HCT116 (cell line): ENCODE measurements at regions of chr1 and their contacts with region 1.

Region 1: GRCh38 chr1:28602536-28603439 is 10.7 kb downstream of the RAB42 start:
- DNase-seq: no peak
- ATAC-seq: peak; percentile 60
- H3K4me3 ChIP-seq: no peak overlapping the region
- H3K27ac ChIP-seq: peak overlapping the region; percentile 57
- H3K4me1 ChIP-seq: peaks cover 17 to 33% of the 10 kb centered on the region in 2 experiments
- H3K27me3 ChIP-seq: no peaks in the 10 kb centered on the region
- CTCF ChIP-seq: peak; percentile 73 to 87 (median 84)
- POLR2A ChIP-seq: no peak
- RAD21 ChIP-seq: peak; percentile 96

Region 2: DNA sequence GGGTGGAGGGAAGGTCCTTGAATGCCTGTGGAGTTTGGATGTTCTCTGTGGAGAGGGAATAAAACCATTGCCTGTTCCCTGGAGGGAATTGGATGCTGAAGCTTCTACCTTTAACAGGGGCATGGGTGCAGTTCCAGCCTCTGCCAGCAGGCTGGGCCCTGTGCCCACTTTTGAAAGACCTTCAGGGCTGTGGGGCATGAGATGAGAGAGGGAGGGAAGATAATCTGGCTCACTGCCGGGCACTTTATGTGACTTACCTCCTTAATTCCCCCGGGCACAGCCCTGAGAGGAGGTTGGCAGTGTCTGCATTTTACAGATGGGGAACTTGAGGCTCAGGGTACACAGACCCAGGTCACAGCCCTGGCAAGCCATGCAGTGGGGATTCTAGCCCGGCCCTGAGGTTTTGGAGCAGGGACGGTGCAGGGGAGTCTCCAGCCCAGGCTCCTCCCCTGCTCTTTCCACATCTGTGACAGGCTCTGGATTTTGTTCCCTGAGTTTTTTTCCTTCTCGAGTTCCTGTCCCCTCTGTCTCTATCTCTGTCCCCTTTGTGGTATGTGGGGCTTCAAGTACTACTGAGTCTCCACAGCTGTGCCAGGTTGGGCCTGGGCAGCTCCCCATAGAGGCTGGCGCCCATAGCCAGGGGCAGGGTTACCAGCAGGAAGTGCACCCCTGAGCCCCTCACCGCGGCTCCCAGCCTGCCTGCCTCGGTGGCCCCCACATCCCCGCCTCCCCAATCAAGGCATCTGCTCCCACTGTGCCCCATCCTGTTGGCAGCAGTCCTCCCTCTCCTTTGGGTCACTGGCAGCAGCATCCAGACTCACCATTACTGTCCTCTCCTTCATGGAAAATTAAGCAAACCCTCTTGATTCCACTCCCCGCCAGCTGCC is 744.5 kb before region 1 on chr1:
- CTCF ChIA-PET with region 1: no interaction called
- POLR2A ChIA-PET with region 1: no interaction called
- RAD21 ChIA-PET with region 1: no interaction called
- intact Hi-C with region 1: loop called (anchors 5 kb)
- DNase-seq: peak; percentile 56
- ATAC-seq: peak; percentile 95
- H3K4me3 ChIP-seq: no peak overlapping the region
- H3K27ac ChIP-seq: no peak overlapping the region
- H3K4me1 ChIP-seq: peaks cover 0 to 9% of the 10 kb centered on the region in 2 experiments; a peak in 2 of 4 replicates
- H3K27me3 ChIP-seq: no peaks in the 10 kb centered on the region
- CTCF ChIP-seq: peak; percentile 88 to 99 (median 98)
- POLR2A ChIP-seq: no peak
- RAD21 ChIP-seq: peak; percentile 98

Region 3: GRCh38 chr1:28359592-28360239 is 243.1 kb before region 1 on chr1:
- CTCF ChIA-PET with region 1: interaction called, 13 read pairs
- POLR2A ChIA-PET with region 1: no interaction called
- RAD21 ChIA-PET with region 1: no interaction called
- intact Hi-C with region 1: loop called (anchors 5 kb)
- DNase-seq: no peak
- ATAC-seq: peak; percentile 91
- H3K4me3 ChIP-seq: no peak overlapping the region
- H3K27ac ChIP-seq: no peak overlapping the region
- H3K4me1 ChIP-seq: peaks cover 0 to 3% of the 10 kb centered on the region in 2 experiments; a peak in 1 of 4 replicates
- H3K27me3 ChIP-seq: no peaks in the 10 kb centered on the region
- CTCF ChIP-seq: peak; percentile 63 to 77 (median 66); a peak in 5 of 6 replicates
- POLR2A ChIP-seq: no peak
- RAD21 ChIP-seq: peak; percentile 73

Region 4: GRCh38 chr1:28409090-28409489 is 193.7 kb before region 1 on chr1:
- CTCF ChIA-PET with region 1: interaction called, 13 read pairs
- POLR2A ChIA-PET with region 1: no interaction called
- RAD21 ChIA-PET with region 1: no interaction called
- intact Hi-C with region 1: loop called (anchors 2 kb)
- DNase-seq: no peak
- ATAC-seq: no peak
- H3K4me3 ChIP-seq: no peak overlapping the region
- H3K27ac ChIP-seq: no peak overlapping the region
- H3K4me1 ChIP-seq: peaks cover 0 to 5% of the 10 kb centered on the region in 2 experiments; a peak in 2 of 4 replicates
- H3K27me3 ChIP-seq: no peaks in the 10 kb centered on the region
- CTCF ChIP-seq: no peak
- POLR2A ChIP-seq: no peak
- RAD21 ChIP-seq: no peak

Region 5: DNA sequence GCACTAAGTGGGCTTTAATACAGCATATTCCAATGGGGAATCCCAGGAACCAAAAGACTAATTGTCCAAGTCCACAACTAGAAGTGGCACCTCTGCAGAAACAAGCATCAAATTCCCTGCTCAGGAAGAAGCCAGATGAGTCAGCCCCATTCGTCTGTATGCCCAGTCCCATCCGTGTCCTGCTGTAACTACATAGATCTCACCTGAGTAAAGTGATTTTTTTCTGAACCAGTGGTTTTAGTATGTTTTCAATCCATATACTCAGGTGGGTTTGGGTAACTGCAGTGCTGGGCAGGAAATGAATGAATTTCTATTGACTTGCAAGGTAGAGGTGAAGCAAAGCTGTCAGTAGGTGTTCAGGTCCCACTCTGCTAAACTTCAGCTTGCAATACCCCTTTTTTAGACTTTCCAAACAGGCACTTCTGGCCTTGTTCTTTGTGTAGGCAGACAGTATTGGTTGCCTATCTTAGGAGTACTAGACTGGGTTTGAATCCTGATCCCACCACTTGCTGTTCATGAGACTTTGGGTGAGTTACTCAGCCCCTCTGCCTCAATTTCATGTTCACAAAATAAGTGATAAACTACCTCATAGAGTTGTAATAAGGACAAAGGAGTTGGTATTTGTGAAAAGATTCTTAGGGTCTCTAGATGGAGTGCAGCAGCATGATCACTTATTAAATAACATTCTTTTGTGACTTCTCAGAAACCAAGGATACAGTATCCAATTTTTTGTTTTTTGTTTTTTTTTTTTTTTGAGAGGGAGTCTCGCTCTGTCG is 91.9 kb before region 1 on chr1:
- CTCF ChIA-PET with region 1: interaction called, 28 read pairs
- POLR2A ChIA-PET with region 1: interaction called, 22 read pairs
- RAD21 ChIA-PET with region 1: no interaction called
- intact Hi-C with region 1: no loop called
- DNase-seq: no peak
- ATAC-seq: peak; percentile 24
- H3K4me3 ChIP-seq: no peak overlapping the region
- H3K27ac ChIP-seq: peak overlapping the region; percentile 97
- H3K4me1 ChIP-seq: peaks cover 19 to 65% of the 10 kb centered on the region in 2 experiments
- H3K27me3 ChIP-seq: no peaks in the 10 kb centered on the region
- CTCF ChIP-seq: no peak
- POLR2A ChIP-seq: peak; percentile 69
- RAD21 ChIP-seq: no peak

Region 6: DNA sequence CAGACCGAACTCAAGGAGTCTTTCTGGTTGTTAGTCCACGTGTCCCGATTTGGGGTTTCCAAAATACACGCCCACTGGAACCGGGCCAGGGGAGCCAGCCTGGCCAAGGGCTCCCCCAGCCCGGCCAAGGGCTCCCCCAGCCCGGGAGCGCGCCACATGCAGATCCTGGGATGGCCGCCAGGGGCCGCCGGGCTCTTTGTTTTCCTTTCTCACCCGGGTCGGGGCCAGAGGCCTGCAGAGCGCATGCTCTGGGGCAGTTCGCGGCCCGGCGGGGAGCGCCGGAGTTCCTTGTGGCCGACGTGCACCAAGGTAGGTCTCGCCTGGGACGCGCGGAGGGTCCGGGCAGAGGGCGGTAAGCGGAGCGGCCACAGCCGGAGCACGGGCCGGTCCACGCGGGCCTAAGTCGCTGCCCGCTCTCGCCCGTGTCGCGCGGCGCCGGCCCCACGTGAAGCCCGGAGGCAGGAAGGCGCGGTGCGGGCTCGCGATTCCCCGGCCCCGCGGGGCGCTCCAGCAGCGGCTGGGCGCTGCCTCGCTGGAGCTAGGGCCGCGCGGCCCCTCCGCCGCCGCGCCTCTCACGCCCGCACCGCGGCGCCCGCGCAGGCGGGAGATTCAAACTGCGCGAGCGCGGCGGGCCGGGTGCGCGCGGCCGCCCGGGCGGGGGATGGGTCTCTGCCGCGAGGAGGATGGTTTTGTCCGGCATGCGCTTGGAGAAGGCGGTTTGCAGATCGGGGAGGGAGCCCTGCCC is 84.6 kb before region 1 on chr1:
- CTCF ChIA-PET with region 1: interaction called, 28 read pairs
- POLR2A ChIA-PET with region 1: interaction called, 6 read pairs
- RAD21 ChIA-PET with region 1: interaction called, 3 read pairs
- intact Hi-C with region 1: loop called (anchors 1 kb)
- DNase-seq: no peak
- ATAC-seq: peak; percentile 75
- H3K4me3 ChIP-seq: peak overlapping the region; percentile 69 to 90
- H3K27ac ChIP-seq: peak overlapping the region; percentile 99
- H3K4me1 ChIP-seq: peaks cover 13 to 60% of the 10 kb centered on the region in 2 experiments; a peak in 3 of 4 replicates
- H3K27me3 ChIP-seq: no peaks in the 10 kb centered on the region
- CTCF ChIP-seq: peak in 2 of 3 experiments; percentile 91 to 97; a peak in 4 of 6 replicates
- POLR2A ChIP-seq: peak; percentile 45
- RAD21 ChIP-seq: no peak

Region 7: DNA sequence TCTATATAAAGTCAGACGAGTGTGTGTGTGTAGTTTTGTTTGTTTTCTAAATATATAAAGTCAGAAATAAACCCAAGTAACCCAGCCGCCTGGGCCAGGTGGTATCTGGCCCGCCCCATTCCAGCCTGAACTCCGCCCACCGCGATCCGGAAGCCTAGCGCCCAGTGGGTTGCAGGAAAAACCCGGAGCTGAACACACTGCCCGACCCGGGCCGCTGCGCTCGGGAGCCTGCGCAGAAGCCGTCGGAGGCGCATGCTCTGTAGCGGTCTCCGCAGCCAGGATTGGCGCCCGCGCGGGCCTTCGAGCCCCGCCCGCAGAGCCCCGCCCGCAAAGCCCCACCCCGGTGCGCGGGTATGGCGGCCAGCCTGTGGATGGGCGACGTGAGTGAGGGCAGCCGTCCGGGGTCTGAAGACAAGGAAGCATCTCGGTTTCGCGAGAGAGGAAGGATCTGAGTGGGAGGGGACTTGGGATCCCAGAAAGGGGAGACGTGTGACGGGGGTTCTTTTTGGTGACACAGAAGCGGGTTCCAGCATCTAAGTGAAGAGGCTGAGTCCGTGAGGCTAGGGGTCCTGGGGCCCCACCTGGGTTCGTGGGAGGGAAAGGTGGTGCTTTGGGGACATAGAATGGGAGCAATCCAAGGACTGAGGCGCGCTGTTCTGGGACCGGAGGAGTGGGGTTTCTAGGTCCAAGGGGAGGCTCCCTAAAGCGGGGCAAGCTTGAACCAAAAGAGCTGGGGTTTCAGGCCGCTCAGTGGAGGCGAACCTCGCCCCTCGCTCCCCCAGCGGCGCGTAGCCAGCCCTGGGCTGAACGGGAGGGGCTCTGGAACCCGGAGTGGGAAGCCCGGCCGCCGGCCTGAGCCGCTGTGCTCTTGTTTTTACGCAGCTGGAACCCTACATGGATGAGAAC is 49.8 kb before region 1 on chr1 and contains the start of gene TRNAU1AP:
- CTCF ChIA-PET with region 1: no interaction called
- POLR2A ChIA-PET with region 1: no interaction called
- RAD21 ChIA-PET with region 1: no interaction called
- intact Hi-C with region 1: no loop called
- DNase-seq: peak; percentile 91
- ATAC-seq: peak; percentile 92
- H3K4me3 ChIP-seq: peak within 1 kb of the TSS; percentile 85 to 99
- H3K27ac ChIP-seq: peak within 1 kb of the TSS; percentile 90
- H3K4me1 ChIP-seq: peaks cover 6 to 22% of the 10 kb centered on the region in 2 experiments; a peak in 3 of 4 replicates
- H3K27me3 ChIP-seq: no peaks in the 10 kb centered on the region
- CTCF ChIP-seq: no peak
- POLR2A ChIP-seq: peak; percentile 78
- RAD21 ChIP-seq: no peak
- total RNA-seq, gene TRNAU1AP: 29.7 TPM

Region 8: GRCh38 chr1:28581536-28582247 is 21.1 kb before region 1 on chr1:
- CTCF ChIA-PET with region 1: interaction called, 10 read pairs
- POLR2A ChIA-PET with region 1: interaction called, 5 read pairs
- RAD21 ChIA-PET with region 1: no interaction called
- intact Hi-C with region 1: no loop called
- DNase-seq: peak; percentile 90
- ATAC-seq: peak; percentile 79
- H3K4me3 ChIP-seq: peak overlapping the region; percentile 97 to 99
- H3K27ac ChIP-seq: peak overlapping the region; percentile 93
- H3K4me1 ChIP-seq: peaks cover 9 to 29% of the 10 kb centered on the region in 2 experiments; a peak in 3 of 4 replicates
- H3K27me3 ChIP-seq: no peaks in the 10 kb centered on the region
- CTCF ChIP-seq: 0 out of 6 replicates have a peak, but pooled peaks of 1 of the 3 experiments have one; percentile 2
- POLR2A ChIP-seq: peak; percentile 99
- RAD21 ChIP-seq: no peak